ENCODE measurements at regions of chr3 and their contacts with region 1.

Region 1: GRCh38 chr3:43162230-43163084 is 56.6 kb upstream of the POMGNT2 start:
- DNase-seq: peak in 8 of 9 donors; percentile 35 to 82 (median 76)
- ATAC-seq: peak; percentile 85
- H3K4me3 ChIP-seq: peak overlapping the region; percentile 19
- H3K4me3 Mint-ChIP-seq: peak overlapping the region; percentile 68 to 91 (median 82)
- H3K27ac ChIP-seq: peak overlapping the region; percentile 74
- H3K27ac Mint-ChIP-seq: peak overlapping the region; percentile 83 to 100 (median 98)
- H3K4me1 ChIP-seq: peaks cover 22 to 26% of the 10 kb centered on the region in 2 donors
- H3K4me1 Mint-ChIP-seq: peaks cover 16 to 37% (median 30%) of the 10 kb centered on the region in 7 donors
- H3K27me3 ChIP-seq: no peaks in the 10 kb centered on the region
- H3K27me3 Mint-ChIP-seq: peaks cover 0 to 2% (median 0%) of the 10 kb centered on the region in 5 donors

Region 2: DNA sequence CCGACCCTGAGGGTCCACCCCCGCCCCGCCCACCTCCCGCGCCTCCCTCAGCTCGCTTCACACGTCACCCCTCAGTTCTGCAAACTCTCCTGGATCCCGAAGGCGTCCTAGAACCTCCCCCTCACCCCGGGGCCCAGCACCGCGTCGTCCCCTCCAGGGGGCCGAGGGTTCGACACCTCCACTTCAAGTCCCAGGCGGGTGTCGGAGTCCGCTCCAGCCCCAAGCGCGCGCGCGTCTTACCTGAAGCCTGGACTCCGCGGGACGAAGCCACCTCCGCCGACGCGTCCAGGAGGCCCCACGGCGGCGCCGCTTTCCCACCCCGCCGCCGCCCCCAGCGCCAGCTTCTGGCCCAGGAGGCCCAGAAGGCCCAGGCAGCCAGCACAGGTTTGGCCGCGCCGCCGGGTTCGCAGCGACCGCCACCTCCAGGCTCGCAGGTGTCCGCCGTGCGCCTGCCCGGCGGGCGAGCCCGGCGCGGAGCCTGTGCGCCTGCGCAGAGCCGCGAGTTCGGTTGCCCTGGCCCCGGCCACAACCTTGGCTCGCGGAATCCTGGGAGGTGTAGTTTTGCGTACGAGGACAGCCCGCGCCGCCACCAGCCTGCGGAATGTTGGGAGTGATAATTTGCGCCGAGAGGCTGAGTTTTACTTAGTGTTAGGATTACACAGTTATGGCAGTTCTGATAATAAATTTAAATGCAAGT is 56.7 kb before region 1 on chr3 and contains the start of gene POMGNT2:
- CTCF ChIA-PET with region 1: no interaction called
- POLR2A ChIA-PET with region 1: no interaction called
- intact Hi-C with region 1: loop called in 1 of 2 experiments (anchors 5 kb)
- DNase-seq: peak; percentile 78 to 92 (median 88)
- ATAC-seq: peak; percentile 97
- H3K4me3 ChIP-seq: peak within 1 kb of the TSS; percentile 67
- H3K4me3 Mint-ChIP-seq: peak within 1 kb of the TSS; percentile 70 to 88 (median 85)
- H3K27ac ChIP-seq: peak within 1 kb of the TSS; percentile 76
- H3K27ac Mint-ChIP-seq: peak within 1 kb of the TSS in 8 of 9 donors; percentile 46 to 91 (median 71)
- H3K4me1 ChIP-seq: peaks cover 9 to 18% of the 10 kb centered on the region in 2 donors
- H3K4me1 Mint-ChIP-seq: peaks cover 11 to 38% (median 21%) of the 10 kb centered on the region in 7 donors
- H3K27me3 ChIP-seq: no peaks in the 10 kb centered on the region
- H3K27me3 Mint-ChIP-seq: peaks cover 0 to 9% (median 0%) of the 10 kb centered on the region in 5 donors
- total RNA-seq, gene POMGNT2: 3.5 to 7.9 (median 6.2) TPM

Region 3: DNA sequence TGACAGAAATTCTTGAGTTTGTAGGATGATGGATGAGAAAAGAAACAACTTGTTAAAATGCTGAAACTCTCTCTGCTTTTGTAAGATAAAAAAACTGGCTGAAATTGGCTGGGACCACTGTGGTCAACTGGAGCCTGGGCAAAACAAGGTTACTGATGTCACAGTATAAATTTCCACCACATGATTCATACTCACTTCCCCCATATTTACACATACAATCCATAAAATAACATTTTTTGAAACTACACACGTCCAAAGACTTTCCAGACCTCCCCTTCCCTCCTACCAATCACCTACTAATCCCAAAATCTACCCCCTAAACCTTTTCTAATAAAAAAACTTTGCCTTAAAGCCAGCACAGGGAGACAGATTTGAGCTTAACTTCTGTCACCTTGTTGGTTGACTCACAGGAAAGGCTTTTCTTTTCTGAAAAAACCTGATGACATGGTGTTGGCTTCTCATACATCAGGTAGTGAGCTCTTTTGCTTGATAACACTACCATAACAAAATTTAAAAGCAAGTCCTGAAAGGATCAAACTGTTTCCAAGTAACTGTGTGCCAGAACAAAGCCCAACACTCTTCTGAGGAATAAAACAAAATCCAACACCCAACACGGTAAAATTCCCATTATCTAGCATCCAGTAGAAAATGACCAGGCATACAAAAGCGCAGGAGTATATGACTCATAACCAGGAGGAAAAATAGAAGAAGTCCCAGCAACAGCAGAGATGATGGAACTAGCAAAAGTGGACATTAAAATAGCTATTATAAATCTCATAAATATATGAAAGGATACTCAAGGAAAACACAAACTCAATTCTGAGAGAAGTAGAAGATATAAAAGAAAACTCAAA is 36.6 kb after region 1 on chr3:
- CTCF ChIA-PET with region 1: interaction called, 15 read pairs
- POLR2A ChIA-PET with region 1: interaction called, 36 read pairs
- intact Hi-C with region 1: loop called (anchors 1 kb)
- DNase-seq: no peak
- ATAC-seq: no peak
- H3K4me3 ChIP-seq: no peak overlapping the region
- H3K4me3 Mint-ChIP-seq: peak overlapping the region in 5 of 10 donors; percentile 45 to 65 (median 51)
- H3K27ac ChIP-seq: no peak overlapping the region
- H3K27ac Mint-ChIP-seq: peak overlapping the region in 5 of 9 donors; percentile 3 to 98 (median 18)
- H3K4me1 ChIP-seq: peaks cover 16 to 54% of the 10 kb centered on the region in 2 donors
- H3K4me1 Mint-ChIP-seq: peaks cover 41 to 77% (median 71%) of the 10 kb centered on the region in 7 donors
- H3K27me3 ChIP-seq: no peaks in the 10 kb centered on the region
- H3K27me3 Mint-ChIP-seq: peaks cover 0 to 23% (median 0%) of the 10 kb centered on the region in 5 donors

Region 4: GRCh38 chr3:43260412-43260811 is 98.0 kb after region 1 on chr3:
- CTCF ChIA-PET with region 1: interaction called, 6 read pairs
- POLR2A ChIA-PET with region 1: no interaction called
- intact Hi-C with region 1: loop called in 1 of 2 experiments (anchors 1 kb)
- DNase-seq: no peak
- ATAC-seq: no peak
- H3K4me3 ChIP-seq: no peak overlapping the region
- H3K4me3 Mint-ChIP-seq: no peak overlapping the region
- H3K27ac ChIP-seq: no peak overlapping the region
- H3K27ac Mint-ChIP-seq: no peak overlapping the region
- H3K4me1 ChIP-seq: peaks cover 0 to 8% of the 10 kb centered on the region in 2 donors
- H3K4me1 Mint-ChIP-seq: peaks cover 19 to 36% (median 27%) of the 10 kb centered on the region in 7 donors
- H3K27me3 ChIP-seq: no peaks in the 10 kb centered on the region
- H3K27me3 Mint-ChIP-seq: no peaks in the 10 kb centered on the region

Region 5: GRCh38 chr3:43378066-43378935 is 215.8 kb after region 1 on chr3:
- CTCF ChIA-PET with region 1: interaction called, 42 read pairs
- POLR2A ChIA-PET with region 1: interaction called, 5 read pairs
- intact Hi-C with region 1: loop called (anchors 1 kb)
- DNase-seq: peak; percentile 30 to 78 (median 71)
- ATAC-seq: peak; percentile 94
- H3K4me3 ChIP-seq: no peak overlapping the region
- H3K4me3 Mint-ChIP-seq: no peak overlapping the region
- H3K27ac ChIP-seq: no peak overlapping the region
- H3K27ac Mint-ChIP-seq: peak overlapping the region in 8 of 9 donors; percentile 26 to 88 (median 40)
- H3K4me1 ChIP-seq: peaks cover 6 to 10% of the 10 kb centered on the region in 2 donors
- H3K4me1 Mint-ChIP-seq: peaks cover 6 to 29% (median 19%) of the 10 kb centered on the region in 7 donors
- H3K27me3 ChIP-seq: no peaks in the 10 kb centered on the region
- H3K27me3 Mint-ChIP-seq: peaks cover 0 to 12% (median 0%) of the 10 kb centered on the region in 5 donors

Region 6: GRCh38 chr3:43503067-43503728 is 340.7 kb after region 1 on chr3:
- CTCF ChIA-PET with region 1: interaction called, 64 read pairs
- POLR2A ChIA-PET with region 1: interaction called, 6 read pairs
- intact Hi-C with region 1: loop called (anchors 1 kb)
- DNase-seq: peak in 6 of 9 donors; percentile 39 to 68 (median 59)
- ATAC-seq: peak; percentile 68
- H3K4me3 ChIP-seq: no peak overlapping the region
- H3K4me3 Mint-ChIP-seq: no peak overlapping the region
- H3K27ac ChIP-seq: no peak overlapping the region
- H3K27ac Mint-ChIP-seq: peak overlapping the region in 4 of 9 donors; percentile 2 to 49 (median 24)
- H3K4me1 ChIP-seq: peaks cover 17 to 18% of the 10 kb centered on the region in 2 donors
- H3K4me1 Mint-ChIP-seq: peaks cover 18 to 51% (median 48%) of the 10 kb centered on the region in 7 donors
- H3K27me3 ChIP-seq: no peaks in the 10 kb centered on the region
- H3K27me3 Mint-ChIP-seq: peaks cover 0 to 8% (median 0%) of the 10 kb centered on the region in 5 donors

Region 7: DNA sequence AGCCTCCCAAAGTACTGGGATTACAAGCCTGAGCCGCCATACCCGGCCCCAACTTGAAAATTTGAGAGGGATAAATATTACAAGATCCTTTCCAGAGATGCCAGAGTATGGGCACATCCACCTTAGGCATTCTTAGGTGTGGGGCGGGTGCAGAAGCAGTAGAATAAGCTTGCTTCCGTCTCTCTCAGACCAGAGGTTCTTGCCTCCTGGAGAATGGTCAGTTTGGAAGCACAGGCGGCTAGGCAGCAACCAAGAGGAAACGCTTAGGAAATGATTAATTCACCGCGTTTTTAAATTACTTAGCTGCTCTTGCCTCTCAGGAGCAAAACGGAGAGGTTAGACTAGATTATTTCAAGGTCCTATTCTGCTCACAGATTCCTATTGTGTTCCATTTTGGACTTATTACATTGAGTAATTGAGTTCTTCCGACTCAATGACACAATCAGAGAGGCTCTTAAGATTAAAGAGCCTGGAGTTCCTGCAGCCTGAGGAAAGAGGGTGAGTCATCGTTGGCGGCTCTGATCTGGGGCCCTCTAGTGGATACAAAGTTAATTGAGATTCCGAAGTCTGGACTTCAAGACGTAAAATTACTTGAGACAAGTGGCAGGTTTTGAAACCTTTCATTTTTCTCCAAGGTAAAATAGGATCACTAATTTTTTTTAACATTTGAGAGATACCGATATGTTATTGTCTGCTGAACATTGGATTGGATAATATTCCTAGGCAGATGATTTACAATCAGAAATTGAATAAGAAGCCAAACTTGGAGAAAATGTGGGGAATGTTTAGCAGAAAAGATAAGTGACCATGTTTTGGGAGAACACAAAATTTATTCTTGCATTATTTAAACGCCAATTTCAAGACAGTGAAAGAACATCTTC is 1073.4 kb after region 1 on chr3:
- CTCF ChIA-PET with region 1: no interaction called
- POLR2A ChIA-PET with region 1: no interaction called
- intact Hi-C with region 1: loop called in 1 of 2 experiments (anchors 1 kb)
- DNase-seq: peak in 8 of 9 donors; percentile 36 to 71 (median 64)
- ATAC-seq: peak; percentile 96
- H3K4me3 ChIP-seq: no peak overlapping the region
- H3K4me3 Mint-ChIP-seq: peak overlapping the region in 2 of 10 donors; percentile 5 to 23
- H3K27ac ChIP-seq: no peak overlapping the region
- H3K27ac Mint-ChIP-seq: no peak overlapping the region
- H3K4me1 ChIP-seq: no peaks in the 10 kb centered on the region
- H3K4me1 Mint-ChIP-seq: peaks cover 4 to 16% (median 12%) of the 10 kb centered on the region in 7 donors
- H3K27me3 ChIP-seq: no peaks in the 10 kb centered on the region
- H3K27me3 Mint-ChIP-seq: peaks cover 8 to 18% (median 9%) of the 10 kb centered on the region in 5 donors

Measured in naive thymus-derived CD4-positive, alpha-beta T cell (primary cell).